Breast epithelium (tissue), 4 donors: ENCODE measurements at regions of chr18 and their contacts with region 1.

Region 1: GRCh38 chr18:27447451-27447881 is 262.4 kb upstream of the CHST9 start:
- DNase-seq: no peak
- H3K4me3 ChIP-seq: no peak overlapping the region
- H3K27ac ChIP-seq: no peak overlapping the region
- H3K4me1 ChIP-seq: no peaks in the 10 kb centered on the region
- H3K27me3 ChIP-seq: no peaks in the 10 kb centered on the region
- CTCF ChIP-seq: no peak
- POLR2A ChIP-seq: no peak

Region 2: GRCh38 chr18:25771841-25772240 is 1675.6 kb before region 1 on chr18:
- intact Hi-C with region 1: loop called (anchors 10 kb)
- DNase-seq: no peak
- H3K4me3 ChIP-seq: no peak overlapping the region
- H3K27ac ChIP-seq: no peak overlapping the region
- H3K4me1 ChIP-seq: no peaks in the 10 kb centered on the region
- H3K27me3 ChIP-seq: no peaks in the 10 kb centered on the region
- CTCF ChIP-seq: no peak
- POLR2A ChIP-seq: no peak

Region 3: DNA sequence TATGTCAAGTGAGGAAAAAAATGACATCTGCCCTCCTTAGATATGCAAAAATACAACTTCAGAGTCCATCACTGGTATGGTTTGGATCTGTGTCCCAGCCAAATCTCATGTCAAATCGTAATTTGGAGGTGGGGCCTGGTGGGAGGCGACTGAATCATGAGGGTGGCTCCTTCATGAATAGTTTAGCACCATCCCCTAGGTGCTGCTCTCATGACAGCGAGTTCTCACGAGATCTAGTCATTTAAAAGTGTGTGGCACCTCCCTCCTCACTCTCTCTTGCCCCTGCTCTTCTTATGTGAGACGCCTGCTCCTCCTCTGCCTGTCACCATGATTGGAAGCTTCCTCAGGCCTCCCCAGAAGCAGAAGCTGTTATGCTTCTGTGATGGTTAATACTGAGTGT is 1319.7 kb before region 1 on chr18:
- intact Hi-C with region 1: loop called (anchors 5 kb)
- DNase-seq: no peak
- H3K4me3 ChIP-seq: no peak overlapping the region
- H3K27ac ChIP-seq: no peak overlapping the region
- H3K4me1 ChIP-seq: no peaks in the 10 kb centered on the region
- H3K27me3 ChIP-seq: no peaks in the 10 kb centered on the region
- CTCF ChIP-seq: no peak
- POLR2A ChIP-seq: no peak

Region 4: DNA sequence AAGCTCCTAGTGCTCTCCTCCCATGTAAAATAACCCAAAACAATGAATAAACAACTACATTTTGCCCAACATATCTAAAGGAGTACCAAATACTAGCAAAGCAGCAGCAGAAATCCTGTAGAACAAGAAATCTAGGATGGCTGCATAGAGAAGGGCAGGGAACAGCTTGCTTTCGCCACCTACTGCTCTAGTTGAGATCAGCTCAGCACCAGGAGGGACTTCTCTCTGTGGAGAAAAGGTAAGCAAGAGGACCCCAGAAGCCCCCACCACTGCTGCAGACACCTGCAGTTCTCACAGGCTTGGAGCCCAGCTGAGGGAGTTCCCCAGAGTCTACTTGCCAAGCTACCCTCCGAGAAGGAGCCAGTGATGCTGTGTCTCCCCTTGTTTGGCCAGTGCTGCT is 19.3 kb before region 1 on chr18:
- intact Hi-C with region 1: no loop called
- DNase-seq: no peak
- H3K4me3 ChIP-seq: no peak overlapping the region
- H3K27ac ChIP-seq: no peak overlapping the region
- H3K4me1 ChIP-seq: no peaks in the 10 kb centered on the region
- H3K27me3 ChIP-seq: no peaks in the 10 kb centered on the region
- CTCF ChIP-seq: no peak
- POLR2A ChIP-seq: no peak

Region 5: DNA sequence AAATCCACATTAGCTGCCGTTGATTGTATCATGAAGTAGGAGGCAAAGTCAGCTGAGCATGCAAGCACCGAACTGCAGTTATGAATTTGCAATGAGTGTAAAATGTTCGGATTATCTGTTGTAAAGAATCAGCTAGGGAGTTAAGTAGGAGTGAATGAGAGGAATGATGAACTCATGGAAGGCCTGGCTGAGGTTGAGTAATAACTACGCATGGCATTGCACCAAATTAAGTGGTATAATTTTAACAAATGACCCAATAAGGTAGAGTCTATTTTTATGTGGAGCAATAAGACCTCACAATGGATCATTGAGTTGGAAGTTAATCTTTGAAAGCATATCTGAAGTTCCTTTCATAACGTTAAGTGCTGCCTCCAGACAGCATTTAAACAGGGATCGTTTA is 25.9 kb after region 1 on chr18:
- intact Hi-C with region 1: loop called (anchors 1 kb)
- DNase-seq: no peak
- H3K4me3 ChIP-seq: no peak overlapping the region
- H3K27ac ChIP-seq: no peak overlapping the region
- H3K4me1 ChIP-seq: no peaks in the 10 kb centered on the region
- H3K27me3 ChIP-seq: no peaks in the 10 kb centered on the region
- CTCF ChIP-seq: no peak
- POLR2A ChIP-seq: no peak